Activated CD4-positive, alpha-beta memory T cell treated with anti-CD3 and anti-CD28 coated beads, Interleukin-2, amount 10 ng/mL, durations not matched to agents 7 days and 5 days (primary cell): ENCODE measurements at regions of chr22 and their contacts with region 1.

Region 1: GRCh38 chr22:50474668-50475492 is at the start of gene SBF1:
- DNase-seq: peak; percentile 91
- H3K4me3 Mint-ChIP-seq: peak within 1 kb of the TSS; percentile 92
- H3K27ac Mint-ChIP-seq: peak within 1 kb of the TSS; percentile 97
- H3K4me1 Mint-ChIP-seq: peaks cover 52% of the 10 kb centered on the region
- H3K27me3 Mint-ChIP-seq: peaks cover 3% of the 10 kb centered on the region
- total RNA-seq, gene SBF1: 181 to 196 TPM

Region 2: GRCh38 chr22:50498322-50498890 is 23.5 kb after region 1 on chr22:
- CTCF ChIA-PET with region 1: interaction called, 13 read pairs
- POLR2A ChIA-PET with region 1: interaction called, 13 read pairs
- DNase-seq: peak; percentile 78
- H3K4me3 Mint-ChIP-seq: no peak overlapping the region
- H3K27ac Mint-ChIP-seq: no peak overlapping the region
- H3K4me1 Mint-ChIP-seq: peaks cover 2% of the 10 kb centered on the region
- H3K27me3 Mint-ChIP-seq: no peaks in the 10 kb centered on the region